Activated naive CD4-positive, alpha-beta T cell treated with anti-CD3 and anti-CD28 coated beads for 36 hours (primary cell): ENCODE measurements at regions of chr19 and their contacts with region 1.

Region 1: DNA sequence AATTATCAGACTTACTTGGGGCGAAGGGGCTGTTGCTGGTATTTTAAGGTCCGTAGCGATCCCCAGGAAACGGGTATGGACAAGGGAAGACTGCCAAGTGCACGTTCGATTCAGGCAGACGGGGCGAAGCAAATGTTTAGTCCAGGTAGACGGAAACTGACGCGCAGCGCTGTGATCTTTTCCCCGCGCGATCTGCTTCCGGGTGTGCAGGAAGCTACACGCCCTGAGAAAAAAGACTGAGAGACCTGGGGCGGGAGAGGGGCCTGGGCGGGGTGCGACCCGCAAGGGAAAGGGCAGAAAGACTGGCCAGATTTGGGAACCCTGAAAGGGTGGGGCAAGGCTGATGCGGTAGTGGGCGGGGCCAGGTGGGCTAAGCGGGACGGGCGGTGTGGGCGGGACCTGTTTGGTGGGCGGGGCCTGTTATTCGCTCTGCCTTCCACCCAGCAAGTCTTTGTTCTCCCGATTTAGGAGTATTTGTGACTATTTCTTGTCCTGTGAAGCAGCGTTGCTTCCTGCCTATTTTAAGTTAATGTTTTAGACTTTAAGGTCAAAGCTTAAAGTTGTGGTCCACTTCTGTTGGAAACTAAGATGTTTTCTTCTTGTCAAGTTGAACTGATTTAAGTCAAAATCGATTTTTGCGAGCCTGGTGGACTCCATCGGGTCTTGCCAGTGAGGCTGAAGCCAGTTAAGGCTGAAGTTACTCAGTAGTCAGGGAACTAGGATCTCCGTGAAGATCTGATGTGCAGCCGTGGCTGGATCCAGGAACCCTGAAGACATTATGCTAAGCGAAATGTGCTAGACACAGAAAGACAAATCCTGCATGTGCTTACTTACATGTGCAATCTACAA is at the start of gene ZNF836:
- DNase-seq: peak; percentile 95
- H3K4me3 Mint-ChIP-seq: peak within 1 kb of the TSS; percentile 94
- H3K27ac Mint-ChIP-seq: peak within 1 kb of the TSS; percentile 95
- H3K4me1 Mint-ChIP-seq: peaks cover 26% of the 10 kb centered on the region
- H3K27me3 Mint-ChIP-seq: no peaks in the 10 kb centered on the region
- total RNA-seq, gene ZNF836: 10.7 to 11.1 TPM

Region 2: DNA sequence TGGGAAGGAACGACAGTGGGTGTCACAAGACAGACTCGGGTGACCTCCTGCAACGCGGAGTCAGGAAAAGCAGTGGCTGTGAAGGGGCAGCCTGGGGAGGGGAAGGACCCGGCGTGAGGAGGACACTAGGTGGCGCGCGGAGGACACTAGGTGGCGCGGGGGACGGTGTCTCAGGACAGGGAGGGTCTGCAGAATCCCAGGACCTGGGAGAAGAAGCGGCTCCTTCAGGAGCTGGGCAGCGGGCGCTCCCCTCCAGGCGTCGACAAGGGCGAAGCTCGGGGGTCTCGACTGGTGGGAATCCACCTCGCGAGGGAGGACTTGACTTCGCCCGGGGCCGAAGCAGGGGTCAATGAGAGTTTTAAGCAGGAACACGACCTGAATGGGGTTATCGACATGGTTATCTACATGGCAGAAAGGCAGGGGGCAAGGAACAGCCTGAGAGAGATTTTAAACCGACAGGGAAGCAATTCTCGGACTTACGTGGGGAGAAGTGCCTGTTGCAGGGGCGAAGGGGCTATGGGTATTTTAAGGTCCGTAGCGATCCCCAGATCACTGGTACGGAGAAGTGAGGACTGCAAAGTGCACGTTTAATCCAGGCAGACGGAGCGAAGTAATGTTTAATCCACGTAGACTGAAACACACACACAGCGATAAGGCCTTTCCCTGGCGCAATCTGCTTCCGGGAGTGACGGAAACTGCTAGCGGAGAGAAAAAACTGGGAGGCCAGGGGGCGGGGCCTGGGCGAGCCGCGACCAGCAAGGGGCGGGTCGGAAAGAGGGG is 32.1 kb before region 1 on chr19 and contains the start of gene ZNF616:
- CTCF ChIA-PET with region 1: no interaction called
- intact Hi-C with region 1: loop called (anchors 1 kb)
- DNase-seq: peak; percentile 99
- H3K4me3 Mint-ChIP-seq: peak within 1 kb of the TSS; percentile 96
- H3K27ac Mint-ChIP-seq: peak within 1 kb of the TSS; percentile 93
- H3K4me1 Mint-ChIP-seq: peaks cover 24% of the 10 kb centered on the region
- H3K27me3 Mint-ChIP-seq: no peaks in the 10 kb centered on the region
- total RNA-seq, gene ZNF616: 7.6 to 8.7 TPM

Region 3: DNA sequence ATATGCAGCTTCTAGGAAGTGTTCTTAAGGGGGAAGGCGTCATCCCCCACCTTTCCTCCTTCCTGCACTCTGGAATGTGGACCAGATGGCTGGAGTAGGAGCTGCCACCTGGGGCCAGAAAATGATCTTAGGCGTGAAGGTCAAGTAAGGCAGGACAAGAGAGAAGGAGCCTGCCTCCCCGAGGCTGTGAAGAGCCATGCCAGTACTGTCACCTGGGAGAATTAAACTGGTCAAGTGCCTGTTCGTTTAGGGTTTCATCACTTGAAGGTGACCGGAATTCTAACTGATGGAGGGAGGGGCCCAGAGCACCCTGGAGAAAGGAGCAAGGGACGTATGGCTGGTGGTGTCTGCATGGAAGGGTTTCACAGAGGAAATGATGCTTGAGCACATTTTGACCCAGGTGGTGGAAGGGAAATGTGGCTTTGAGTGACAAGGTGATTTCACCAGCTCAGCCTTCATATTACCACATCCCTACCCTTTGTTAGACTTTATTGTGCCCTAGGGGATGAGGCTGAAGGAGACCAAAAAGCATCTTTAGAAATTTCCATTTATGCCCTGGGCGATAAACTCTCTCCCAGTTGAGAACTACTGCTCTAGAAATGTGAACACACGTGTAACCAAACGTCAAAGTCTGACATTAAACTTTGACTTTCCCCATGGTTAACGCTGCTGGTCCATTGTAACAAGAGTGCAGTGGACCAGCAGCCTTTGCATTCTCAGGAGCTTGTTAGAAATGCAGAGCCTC is 55.8 kb after region 1 on chr19:
- CTCF ChIA-PET with region 1: no interaction called
- intact Hi-C with region 1: loop called (anchors 2 kb)
- DNase-seq: no peak
- H3K4me3 Mint-ChIP-seq: no peak overlapping the region
- H3K27ac Mint-ChIP-seq: peak overlapping the region; percentile 85
- H3K4me1 Mint-ChIP-seq: peaks cover 32% of the 10 kb centered on the region
- H3K27me3 Mint-ChIP-seq: no peaks in the 10 kb centered on the region